Right cardiac atrium (tissue), 5 donors: ENCODE measurements at regions of chr10 and their contacts with region 1.

Region 1: GRCh38 chr10:124992462-124993344 is 50.8 kb downstream of the ZRANB1 start:
- DNase-seq: peak; percentile 76 to 88 (median 83)
- ATAC-seq: peak; percentile 61 to 73
- H3K4me3 ChIP-seq: no peak overlapping the region
- H3K27ac ChIP-seq: peak overlapping the region; percentile 43
- H3K4me1 ChIP-seq: peaks cover 4% of the 10 kb centered on the region
- H3K27me3 ChIP-seq: no peaks in the 10 kb centered on the region

Region 2: GRCh38 chr10:125048101-125048864 is 55.6 kb after region 1 on chr10:
- intact Hi-C with region 1: loop called in 2 of 4 experiments (anchors 10 kb)
- DNase-seq: peak; percentile 87 to 95 (median 94)
- ATAC-seq: peak; percentile 92 to 93
- H3K4me3 ChIP-seq: no peak overlapping the region
- H3K27ac ChIP-seq: no peak overlapping the region
- H3K4me1 ChIP-seq: peaks cover 38% of the 10 kb centered on the region
- H3K27me3 ChIP-seq: no peaks in the 10 kb centered on the region

Region 3: GRCh38 chr10:125060826-125061556 is 68.3 kb after region 1 on chr10:
- intact Hi-C with region 1: loop called in 1 of 4 experiments (anchors 5 kb)
- DNase-seq: peak; percentile 86 to 95 (median 94)
- ATAC-seq: peak; percentile 64 to 78
- H3K4me3 ChIP-seq: no peak overlapping the region
- H3K27ac ChIP-seq: peak overlapping the region; percentile 34
- H3K4me1 ChIP-seq: peaks cover 53% of the 10 kb centered on the region
- H3K27me3 ChIP-seq: no peaks in the 10 kb centered on the region